Activated CD4-positive, alpha-beta memory T cell treated with anti-CD3 and anti-CD28 coated beads, Interleukin-2, amount 10 ng/mL, durations not matched to agents 7 days and 5 days (primary cell): ENCODE measurements at regions of chr10 and their contacts with region 1.

Region 1: DNA sequence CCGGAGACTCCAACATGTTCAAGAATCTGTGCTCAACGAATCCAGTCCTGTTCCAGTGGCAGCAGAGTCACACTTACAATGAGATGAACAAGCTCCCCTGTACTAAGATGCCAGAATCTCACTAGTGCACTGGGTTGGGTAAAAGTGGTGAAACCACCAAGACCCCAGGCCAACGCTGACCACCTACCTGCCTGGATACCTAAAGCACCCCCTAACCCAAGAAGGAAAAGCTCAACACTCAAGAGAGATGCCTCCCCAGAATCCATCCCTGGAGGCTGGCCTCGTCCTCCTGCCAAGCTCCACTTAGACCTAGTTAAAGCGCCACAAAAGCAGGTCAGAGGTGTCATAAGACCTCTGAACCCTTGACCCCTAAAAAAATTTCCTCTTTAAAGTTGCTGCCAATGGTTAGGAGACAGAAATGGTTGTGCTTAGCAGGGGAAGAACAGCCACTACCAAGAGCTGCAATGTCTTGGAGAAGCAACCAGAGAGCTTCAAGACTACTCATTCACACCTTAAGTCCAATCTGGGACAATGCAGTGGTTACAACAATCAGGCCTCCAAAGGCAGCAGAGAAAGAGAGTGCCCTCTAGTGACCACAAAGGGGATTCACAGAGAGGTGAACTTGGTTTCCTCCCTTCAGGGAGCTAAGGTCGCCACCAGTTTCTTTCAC is 94.6 kb upstream of the MACROH2A2 start:
- DNase-seq: peak; percentile 26
- H3K4me3 Mint-ChIP-seq: no peak overlapping the region
- H3K27ac Mint-ChIP-seq: no peak overlapping the region
- H3K4me1 Mint-ChIP-seq: no peaks in the 10 kb centered on the region
- H3K27me3 Mint-ChIP-seq: peaks cover 11% of the 10 kb centered on the region

Region 2: DNA sequence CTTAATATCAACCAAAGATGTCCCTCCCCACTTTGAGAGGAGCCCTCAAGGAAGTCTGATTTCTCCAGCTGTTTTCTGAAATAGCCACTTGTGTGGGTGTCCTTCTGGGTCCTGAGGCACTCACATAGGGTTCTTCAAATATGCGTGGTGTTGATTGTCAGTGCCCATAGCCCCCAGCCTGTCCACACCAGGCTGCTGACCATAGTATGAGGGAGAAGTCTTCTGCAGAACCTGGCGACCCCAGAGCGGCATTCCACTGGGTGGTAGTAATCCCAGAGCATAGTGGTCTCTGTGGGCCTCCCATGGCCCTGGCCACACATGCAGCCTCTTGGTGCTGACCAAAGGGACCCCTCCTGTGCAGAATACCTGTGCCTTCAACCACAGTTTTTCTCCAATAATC is 12.0 kb after region 1 on chr10:
- CTCF ChIA-PET with region 1: interaction called, 12 read pairs
- POLR2A ChIA-PET with region 1: no interaction called
- DNase-seq: no peak
- H3K4me3 Mint-ChIP-seq: no peak overlapping the region
- H3K27ac Mint-ChIP-seq: no peak overlapping the region
- H3K4me1 Mint-ChIP-seq: no peaks in the 10 kb centered on the region
- H3K27me3 Mint-ChIP-seq: peaks cover 40% of the 10 kb centered on the region